ENCODE measurements at regions of chr7 and their contacts with region 1.

Region 1: DNA sequence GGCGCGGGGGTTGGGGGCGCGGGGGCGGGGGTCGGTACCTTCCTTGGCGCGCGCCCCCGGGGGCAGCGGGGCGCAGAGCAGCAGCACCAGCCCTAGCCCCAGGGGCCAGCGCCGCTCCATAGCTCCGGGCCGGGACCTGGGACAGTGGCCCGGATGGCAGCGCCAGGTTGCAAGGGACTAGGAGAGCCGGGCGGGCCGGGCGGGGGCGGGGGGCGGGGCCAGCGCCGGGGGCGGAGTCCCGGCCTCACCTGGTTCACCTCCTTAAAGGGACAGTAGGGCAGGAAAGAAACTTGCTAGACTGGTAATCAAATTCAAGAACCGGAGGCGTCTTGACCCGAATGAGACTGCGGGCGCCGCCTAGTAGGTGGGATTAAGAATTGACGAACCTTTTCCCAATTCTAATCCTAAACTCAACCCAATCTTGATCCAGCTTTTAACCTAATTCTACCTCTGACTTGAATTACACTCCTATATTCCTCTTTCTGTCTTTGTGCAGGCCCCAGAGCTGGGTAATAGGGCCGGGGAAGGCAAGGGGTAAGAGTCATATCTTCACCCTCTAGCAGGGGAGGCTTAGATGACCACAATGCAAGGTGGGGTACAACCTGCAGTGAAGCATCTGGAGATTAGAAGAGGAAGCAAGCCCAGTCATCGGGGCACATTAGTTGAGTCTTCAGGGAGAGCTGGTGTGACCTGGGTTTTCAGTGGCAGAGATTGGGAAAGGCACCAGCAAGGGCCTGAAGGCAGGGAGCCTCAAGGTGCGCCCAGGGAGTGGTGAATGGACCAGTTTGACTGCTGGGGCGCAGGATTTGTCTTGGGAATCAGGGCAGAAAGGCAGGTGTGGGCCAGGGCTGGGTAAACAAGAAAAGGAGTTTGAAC is at the start of gene EPHA1:
- DNase-seq: peak; percentile 56
- H3K4me3 Mint-ChIP-seq: peak within 1 kb of the TSS; percentile 70
- H3K27ac Mint-ChIP-seq: peak within 1 kb of the TSS; percentile 42
- H3K4me1 Mint-ChIP-seq: peaks cover 75% of the 10 kb centered on the region
- H3K27me3 Mint-ChIP-seq: no peaks in the 10 kb centered on the region
- total RNA-seq, gene EPHA1: 1.0 to 1.3 TPM

Region 2: GRCh38 chr7:143372070-143372469 is 36.9 kb before region 1 on chr7:
- CTCF ChIA-PET with region 1: interaction called, 4 read pairs
- intact Hi-C with region 1: loop called (anchors 5 kb)
- DNase-seq: peak; percentile 90
- H3K4me3 Mint-ChIP-seq: no peak overlapping the region
- H3K27ac Mint-ChIP-seq: peak overlapping the region; percentile 24
- H3K4me1 Mint-ChIP-seq: peaks cover 41% of the 10 kb centered on the region
- H3K27me3 Mint-ChIP-seq: no peaks in the 10 kb centered on the region

Region 3: DNA sequence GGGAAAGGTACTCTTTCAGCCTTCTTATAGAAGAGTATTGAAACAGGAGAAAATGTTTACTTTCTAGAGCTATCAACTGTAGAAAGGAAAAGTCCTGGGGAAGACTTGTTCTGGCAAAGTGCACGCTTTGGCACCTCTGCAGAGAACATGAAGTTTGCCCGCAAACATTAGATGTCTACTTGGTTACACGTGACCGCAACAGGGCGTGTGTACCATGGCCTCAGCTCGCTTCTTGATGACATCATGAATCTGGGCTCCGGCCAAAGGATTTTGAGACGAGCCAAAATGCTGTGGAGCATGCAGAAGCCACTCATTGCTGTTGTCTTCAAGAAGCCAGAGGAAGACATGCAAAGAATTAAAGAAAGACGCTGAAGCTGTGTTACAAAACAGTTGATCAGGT is 25.7 kb after region 1 on chr7:
- CTCF ChIA-PET with region 1: no interaction called
- intact Hi-C with region 1: no loop called
- DNase-seq: no peak
- H3K4me3 Mint-ChIP-seq: no peak overlapping the region
- H3K27ac Mint-ChIP-seq: no peak overlapping the region
- H3K4me1 Mint-ChIP-seq: peaks cover 28% of the 10 kb centered on the region
- H3K27me3 Mint-ChIP-seq: no peaks in the 10 kb centered on the region